ENCODE measurements at regions of chrX and their contacts with region 1.

Region 1: GRCh38 chrX:41084044-41084892 is 977 bp upstream of the USP9X start:
- DNase-seq: peak; percentile 94
- ATAC-seq: peak; percentile 64
- H3K4me3 Mint-ChIP-seq: peak overlapping the region; percentile 90
- H3K27ac Mint-ChIP-seq: peak overlapping the region; percentile 99
- H3K4me1 Mint-ChIP-seq: peaks cover 36% of the 10 kb centered on the region
- H3K27me3 Mint-ChIP-seq: no peaks in the 10 kb centered on the region
- CTCF ChIP-seq: no peak

Region 2: GRCh38 chrX:40647307-40648197 is 436.7 kb before region 1 on chrX and contains the start of gene CXorf38:
- CTCF ChIA-PET with region 1: no interaction called
- POLR2A ChIA-PET with region 1: interaction called, 12 read pairs
- intact Hi-C with region 1: loop called (anchors 1 kb)
- DNase-seq: peak; percentile 83
- ATAC-seq: peak; percentile 67
- H3K4me3 Mint-ChIP-seq: peak within 1 kb of the TSS; percentile 94
- H3K27ac Mint-ChIP-seq: peak within 1 kb of the TSS; percentile 93
- H3K4me1 Mint-ChIP-seq: peaks cover 39% of the 10 kb centered on the region
- H3K27me3 Mint-ChIP-seq: no peaks in the 10 kb centered on the region
- CTCF ChIP-seq: no peak
- total RNA-seq, gene CXorf38: 20.9 and 21.9 TPM in 2 replicates

Region 3: GRCh38 chrX:40933132-40933705 is 151.0 kb before region 1 on chrX:
- CTCF ChIA-PET with region 1: no interaction called
- POLR2A ChIA-PET with region 1: no interaction called
- intact Hi-C with region 1: no loop called
- DNase-seq: no peak
- ATAC-seq: no peak
- H3K4me3 Mint-ChIP-seq: peak overlapping the region; percentile 80
- H3K27ac Mint-ChIP-seq: peak overlapping the region; percentile 74
- H3K4me1 Mint-ChIP-seq: peaks cover 18% of the 10 kb centered on the region
- H3K27me3 Mint-ChIP-seq: no peaks in the 10 kb centered on the region
- CTCF ChIP-seq: no peak

Region 4: DNA sequence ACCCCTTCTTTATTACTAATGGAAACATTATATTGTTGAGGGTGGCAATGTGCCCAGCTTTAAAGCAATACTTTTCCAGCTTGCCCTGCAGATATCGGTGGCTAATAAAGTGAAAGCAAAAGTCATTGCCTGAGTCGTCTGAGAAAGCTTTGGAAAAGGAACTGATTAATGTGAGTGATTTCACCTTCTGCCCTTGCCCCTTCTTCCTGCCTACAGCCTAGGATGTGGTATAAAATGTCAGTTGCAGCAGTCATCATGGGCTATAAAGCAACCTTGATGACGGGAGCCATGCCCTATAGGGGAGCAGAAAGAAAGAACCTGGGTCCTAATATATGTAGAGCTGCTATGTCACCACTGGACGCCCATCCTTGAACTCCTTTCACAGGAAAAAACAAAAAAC is 131.4 kb before region 1 on chrX:
- CTCF ChIA-PET with region 1: no interaction called
- POLR2A ChIA-PET with region 1: interaction called, 8 read pairs
- intact Hi-C with region 1: loop called (anchors 10 kb)
- DNase-seq: no peak
- ATAC-seq: peak; percentile 56
- H3K4me3 Mint-ChIP-seq: peak overlapping the region; percentile 76
- H3K27ac Mint-ChIP-seq: peak overlapping the region; percentile 65
- H3K4me1 Mint-ChIP-seq: peaks cover 15% of the 10 kb centered on the region
- H3K27me3 Mint-ChIP-seq: no peaks in the 10 kb centered on the region
- CTCF ChIP-seq: no peak

Region 5: DNA sequence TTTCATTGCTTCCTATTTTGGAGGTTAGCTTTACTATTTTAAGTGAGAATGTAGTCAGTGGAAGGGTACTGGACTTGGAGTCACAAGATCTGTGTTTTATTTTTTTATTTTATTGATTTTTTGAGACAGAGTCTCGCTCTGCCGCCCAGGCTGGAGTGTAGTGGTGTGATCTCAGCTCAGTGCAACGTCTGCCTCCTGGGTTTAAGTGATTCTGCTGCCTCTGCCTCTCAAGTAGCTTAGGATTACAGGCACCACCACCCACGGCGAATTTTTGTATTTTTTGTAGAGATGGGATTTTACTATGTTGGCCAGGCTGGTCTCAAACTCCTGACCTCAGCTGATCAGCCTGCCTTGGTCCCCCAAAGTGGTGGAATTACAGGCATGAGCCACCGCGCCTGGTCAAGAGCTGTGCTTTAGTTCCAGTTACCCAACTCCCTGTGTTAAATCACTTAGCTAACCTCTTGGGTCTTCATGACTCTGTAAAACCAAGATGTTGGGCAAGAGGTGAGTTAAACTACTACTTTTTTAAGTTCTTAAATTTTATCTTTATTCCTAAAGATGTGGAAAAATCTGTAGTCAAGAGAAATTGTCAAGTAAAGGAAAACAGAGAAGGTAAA is 12.2 kb after region 1 on chrX:
- CTCF ChIA-PET with region 1: no interaction called
- POLR2A ChIA-PET with region 1: interaction called, 10 read pairs
- intact Hi-C with region 1: no loop called
- DNase-seq: no peak
- ATAC-seq: no peak
- H3K4me3 Mint-ChIP-seq: no peak overlapping the region
- H3K27ac Mint-ChIP-seq: peak overlapping the region; percentile 9
- H3K4me1 Mint-ChIP-seq: peaks cover 60% of the 10 kb centered on the region
- H3K27me3 Mint-ChIP-seq: no peaks in the 10 kb centered on the region
- CTCF ChIP-seq: no peak

Region 6: GRCh38 chrX:41116948-41117347 is 32.7 kb after region 1 on chrX:
- CTCF ChIA-PET with region 1: interaction called, 16 read pairs
- POLR2A ChIA-PET with region 1: interaction called, 47 read pairs
- intact Hi-C with region 1: loop called (anchors 1 kb)
- DNase-seq: no peak
- ATAC-seq: peak; percentile 58
- H3K4me3 Mint-ChIP-seq: peak overlapping the region; percentile 40
- H3K27ac Mint-ChIP-seq: peak overlapping the region; percentile 79
- H3K4me1 Mint-ChIP-seq: peaks cover 71% of the 10 kb centered on the region
- H3K27me3 Mint-ChIP-seq: no peaks in the 10 kb centered on the region
- CTCF ChIP-seq: no peak